AG04450 (cell line): ENCODE measurements at regions of chr7 and their contacts with region 1.

Region 1: DNA sequence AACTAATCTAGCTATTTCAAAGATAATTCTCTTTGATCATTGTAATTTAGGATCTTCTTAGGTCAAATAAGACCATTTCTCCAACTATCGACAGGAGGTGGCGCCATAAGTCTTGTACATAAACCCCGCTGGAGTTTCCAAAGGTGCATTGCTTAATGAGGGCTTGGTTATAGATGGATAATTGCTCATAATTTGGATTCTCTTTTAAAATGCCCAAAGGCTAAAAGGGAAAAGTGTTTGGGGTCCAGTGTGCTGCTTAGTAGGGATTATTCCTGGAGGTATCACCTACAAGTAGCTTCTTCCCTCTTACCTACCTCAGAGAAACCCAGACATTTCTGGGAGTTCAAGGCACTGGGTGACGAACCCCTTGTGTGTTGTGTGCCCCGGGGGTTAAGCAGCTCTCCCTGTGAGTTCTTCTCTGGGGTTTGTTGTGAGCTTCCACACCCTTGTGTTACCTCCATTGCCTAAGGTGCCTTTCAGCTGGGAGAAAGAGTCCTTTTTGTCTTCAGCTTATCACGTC is 75.2 kb downstream of the PAXIP1 start:
- DNase-seq: peak; percentile 76
- H3K4me3 ChIP-seq: peak overlapping the region; percentile 73
- H3K27ac ChIP-seq: peak overlapping the region; percentile 47
- H3K27me3 ChIP-seq: no peaks in the 10 kb centered on the region
- CTCF ChIP-seq: peak; percentile 71

Region 2: GRCh38 chr7:154672659-154673415 is 254.8 kb before region 1 on chr7:
- CTCF ChIA-PET with region 1: no interaction called
- POLR2A ChIA-PET with region 1: no interaction called
- DNase-seq: no peak
- H3K4me3 ChIP-seq: no peak overlapping the region
- H3K27ac ChIP-seq: no peak overlapping the region
- H3K27me3 ChIP-seq: no peaks in the 10 kb centered on the region
- CTCF ChIP-seq: no peak

Region 3: GRCh38 chr7:154913638-154914312 is 13.9 kb before region 1 on chr7:
- CTCF ChIA-PET with region 1: interaction called, 55 read pairs
- POLR2A ChIA-PET with region 1: interaction called, 6 read pairs
- DNase-seq: peak; percentile 26
- H3K4me3 ChIP-seq: peak overlapping the region; percentile 32; the same call in 1 of the 2 replicates
- H3K27ac ChIP-seq: no peak overlapping the region
- H3K27me3 ChIP-seq: peaks cover 2% of the 10 kb centered on the region
- CTCF ChIP-seq: peak; percentile 94

Region 4: DNA sequence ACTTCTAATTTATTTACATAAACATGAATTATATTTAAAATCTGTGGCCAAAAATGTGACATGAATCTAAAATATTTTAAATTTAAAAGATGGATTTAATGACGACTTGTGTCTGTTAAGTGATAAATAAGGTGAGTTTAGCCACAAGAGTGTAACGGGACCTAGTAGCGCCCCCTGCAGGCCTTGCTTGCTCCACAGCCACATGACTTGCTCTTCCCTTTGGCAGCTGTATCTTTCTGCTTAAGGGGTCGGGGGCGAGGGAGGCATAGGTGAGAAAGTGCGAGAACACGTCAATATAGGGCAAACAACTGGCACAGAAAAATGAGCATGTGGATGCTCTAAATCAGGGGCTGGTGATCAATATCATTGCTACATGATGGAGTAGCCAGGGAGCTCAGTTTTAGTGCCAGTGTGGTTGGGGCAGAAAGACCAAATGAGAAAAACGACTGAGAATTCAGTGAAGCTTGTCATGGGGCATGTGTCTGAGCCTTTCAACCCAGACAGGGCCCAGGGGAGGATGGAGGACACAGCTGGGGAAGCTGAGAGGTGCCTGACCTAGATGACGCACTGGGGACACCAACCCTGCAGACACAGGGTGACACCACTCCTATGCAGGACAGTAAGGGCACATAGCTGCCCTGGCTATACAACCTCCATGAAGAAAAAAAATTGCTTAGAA is 25.5 kb after region 1 on chr7:
- CTCF ChIA-PET with region 1: interaction called, 79 read pairs
- POLR2A ChIA-PET with region 1: no interaction called
- DNase-seq: no peak
- H3K4me3 ChIP-seq: no peak overlapping the region
- H3K27ac ChIP-seq: no peak overlapping the region
- H3K27me3 ChIP-seq: no peaks in the 10 kb centered on the region
- CTCF ChIP-seq: peak; percentile 68

Region 5: GRCh38 chr7:155298834-155299534 is 371.3 kb after region 1 on chr7:
- CTCF ChIA-PET with region 1: interaction called, 10 read pairs
- POLR2A ChIA-PET with region 1: no interaction called
- DNase-seq: peak; percentile 88
- H3K4me3 ChIP-seq: peak overlapping the region; percentile 73
- H3K27ac ChIP-seq: peak overlapping the region; percentile 80
- H3K27me3 ChIP-seq: no peaks in the 10 kb centered on the region
- CTCF ChIP-seq: no peak

Region 6: DNA sequence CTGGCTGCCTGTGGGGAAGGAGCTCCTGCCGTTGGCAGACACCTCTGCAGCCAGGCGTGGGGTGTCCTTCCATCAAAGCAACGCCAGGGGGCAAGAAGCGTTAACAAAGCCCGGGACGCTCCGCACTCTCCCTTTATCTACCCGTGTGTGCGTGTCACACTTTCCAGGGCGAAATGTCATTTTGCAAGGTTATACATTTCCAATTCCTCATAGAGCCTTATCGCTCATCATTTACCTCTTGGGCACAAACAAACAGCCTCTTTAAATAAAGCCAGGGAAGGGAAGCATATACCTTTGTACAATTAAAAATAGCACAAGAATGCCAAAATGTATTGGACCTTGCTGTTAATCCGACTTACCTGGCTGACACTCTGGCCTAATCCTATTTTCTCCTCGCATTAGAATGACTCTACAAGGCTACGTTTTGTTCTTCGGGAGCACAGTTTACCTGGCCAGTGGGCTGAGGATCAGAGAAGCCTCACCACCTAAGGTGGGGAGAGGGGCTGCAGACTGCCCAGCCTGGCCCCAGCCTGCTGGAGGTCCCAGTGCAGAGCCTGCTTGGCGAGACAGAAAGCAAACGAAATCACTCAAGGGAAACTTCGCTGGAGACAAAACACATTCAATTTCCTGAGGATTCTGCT is 452.7 kb after region 1 on chr7:
- CTCF ChIA-PET with region 1: interaction called, 18 read pairs
- POLR2A ChIA-PET with region 1: no interaction called
- DNase-seq: peak; percentile 18
- H3K4me3 ChIP-seq: no peak overlapping the region
- H3K27ac ChIP-seq: no peak overlapping the region
- H3K27me3 ChIP-seq: peaks cover 81% of the 10 kb centered on the region
- CTCF ChIP-seq: peak; percentile 76